ENCODE measurements at regions of chr5 and their contacts with region 1.

Region 1: GRCh38 chr5:147617711-147618350 is 108.0 kb upstream of the DPYSL3 start:
- DNase-seq: no peak
- ATAC-seq: no peak
- H3K4me3 ChIP-seq: no peak overlapping the region
- H3K27ac ChIP-seq: no peak overlapping the region
- H3K4me1 ChIP-seq: no peaks in the 10 kb centered on the region
- H3K27me3 ChIP-seq: no peaks in the 10 kb centered on the region
- CTCF ChIP-seq: no peak

Region 2: DNA sequence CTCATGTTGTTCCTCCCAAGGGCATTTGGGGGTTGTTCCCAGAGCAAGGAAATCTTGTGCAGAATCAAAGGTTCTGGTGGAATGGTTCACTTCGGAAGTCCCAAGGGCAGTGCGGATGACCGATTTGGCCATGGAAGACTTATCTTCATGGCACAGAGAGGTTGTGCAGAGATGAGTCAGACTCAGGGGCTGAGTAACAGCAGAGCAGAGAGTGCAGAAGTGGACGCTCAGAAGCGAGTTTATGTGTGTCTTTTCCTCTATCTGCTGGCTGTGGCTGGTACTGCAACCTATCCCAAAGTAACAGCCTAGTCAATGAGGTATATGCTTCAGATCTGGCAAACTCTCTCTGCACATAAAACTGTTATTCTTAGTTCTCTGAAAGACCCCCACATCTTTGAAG is 226.1 kb before region 1 on chr5:
- CTCF ChIA-PET with region 1: no interaction called
- POLR2A ChIA-PET with region 1: no interaction called
- in situ Hi-C with region 1: no loop called
- intact Hi-C with region 1: no loop called
- DNase-seq: peak; percentile 33
- ATAC-seq: peak; percentile 80
- H3K4me3 ChIP-seq: no peak overlapping the region
- H3K27ac ChIP-seq: no peak overlapping the region
- H3K4me1 ChIP-seq: no peaks in the 10 kb centered on the region
- H3K27me3 ChIP-seq: no peaks in the 10 kb centered on the region
- CTCF ChIP-seq: peak; percentile 48; the same call in 1 of the 2 replicates

Region 3: DNA sequence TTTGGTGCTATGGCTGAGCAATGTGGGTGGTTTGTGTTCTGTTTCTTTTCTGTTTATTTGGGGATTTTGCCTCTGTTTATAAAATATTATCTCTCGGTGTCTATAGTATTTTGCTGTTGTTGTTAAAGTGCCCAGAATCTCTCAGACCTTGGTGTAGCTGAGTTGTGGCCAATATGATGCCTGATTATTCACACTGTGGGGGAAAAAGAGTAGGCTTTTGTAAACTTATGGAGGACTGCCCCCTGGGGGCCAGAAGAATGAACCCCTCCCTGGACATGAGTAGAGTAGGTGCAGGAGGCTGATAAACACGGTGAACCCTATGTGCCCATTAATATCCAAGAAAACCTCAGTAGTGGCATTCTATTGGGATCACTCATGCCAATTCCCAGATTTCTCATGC is 59.0 kb before region 1 on chr5:
- CTCF ChIA-PET with region 1: no interaction called
- POLR2A ChIA-PET with region 1: no interaction called
- in situ Hi-C with region 1: no loop called
- intact Hi-C with region 1: no loop called
- DNase-seq: no peak
- ATAC-seq: peak; percentile 62; the same call in 1 of the 2 replicates
- H3K4me3 ChIP-seq: no peak overlapping the region
- H3K27ac ChIP-seq: no peak overlapping the region
- H3K4me1 ChIP-seq: no peaks in the 10 kb centered on the region
- H3K27me3 ChIP-seq: no peaks in the 10 kb centered on the region; the same call in 1 of the 2 replicates
- CTCF ChIP-seq: peak; percentile 33; the same call in 1 of the 2 replicates

Region 4: GRCh38 chr5:147822686-147823491 is 205.1 kb after region 1 on chr5:
- CTCF ChIA-PET with region 1: interaction called, 10 read pairs
- POLR2A ChIA-PET with region 1: no interaction called
- in situ Hi-C with region 1: no loop called
- intact Hi-C with region 1: no loop called
- DNase-seq: peak; percentile 61
- ATAC-seq: peak; percentile 78
- H3K4me3 ChIP-seq: no peak overlapping the region
- H3K27ac ChIP-seq: no peak overlapping the region
- H3K4me1 ChIP-seq: no peaks in the 10 kb centered on the region
- H3K27me3 ChIP-seq: no peaks in the 10 kb centered on the region
- CTCF ChIP-seq: peak; percentile 92

Region 5: GRCh38 chr5:148209151-148209770 is 591.4 kb after region 1 on chr5:
- CTCF ChIA-PET with region 1: no interaction called
- POLR2A ChIA-PET with region 1: no interaction called
- in situ Hi-C with region 1: no loop called
- intact Hi-C with region 1: no loop called
- DNase-seq: no peak
- ATAC-seq: no peak
- H3K4me3 ChIP-seq: no peak overlapping the region
- H3K27ac ChIP-seq: no peak overlapping the region
- H3K4me1 ChIP-seq: no peaks in the 10 kb centered on the region
- H3K27me3 ChIP-seq: no peaks in the 10 kb centered on the region
- CTCF ChIP-seq: no peak